Activated CD4-positive, alpha-beta T cell treated with anti-CD3 and anti-CD28 coated beads for 36 hours (primary cell): ENCODE measurements at regions of chr7 and their contacts with region 1.

Region 1: GRCh38 chr7:96321658-96322372 is at the start of gene SLC25A13:
- DNase-seq: peak; percentile 80
- ATAC-seq: peak; percentile 59
- H3K4me3 Mint-ChIP-seq: peak within 1 kb of the TSS; percentile 77
- H3K27ac Mint-ChIP-seq: peak within 1 kb of the TSS; percentile 96
- H3K4me1 Mint-ChIP-seq: peaks cover 39% of the 10 kb centered on the region
- H3K27me3 Mint-ChIP-seq: no peaks in the 10 kb centered on the region
- total RNA-seq, gene SLC25A13: 10.3 to 11.3 TPM

Region 2: GRCh38 chr7:95511716-95512260 is 810.0 kb before region 1 on chr7:
- CTCF ChIA-PET with region 1: no interaction called
- POLR2A ChIA-PET with region 1: no interaction called
- intact Hi-C with region 1: loop called in 1 of 2 experiments (anchors 10 kb)
- DNase-seq: peak; percentile 76
- ATAC-seq: peak; percentile 92
- H3K4me3 Mint-ChIP-seq: no peak overlapping the region
- H3K27ac Mint-ChIP-seq: no peak overlapping the region
- H3K4me1 Mint-ChIP-seq: no peaks in the 10 kb centered on the region
- H3K27me3 Mint-ChIP-seq: peaks cover 7% of the 10 kb centered on the region

Region 3: GRCh38 chr7:96285579-96285978 is 36.2 kb before region 1 on chr7:
- CTCF ChIA-PET with region 1: no interaction called
- POLR2A ChIA-PET with region 1: interaction called, 7 read pairs
- intact Hi-C with region 1: loop called (anchors 1 kb)
- DNase-seq: peak; percentile 37
- ATAC-seq: peak; percentile 60
- H3K4me3 Mint-ChIP-seq: peak overlapping the region; percentile 28
- H3K27ac Mint-ChIP-seq: peak overlapping the region; percentile 94
- H3K4me1 Mint-ChIP-seq: peaks cover 43% of the 10 kb centered on the region
- H3K27me3 Mint-ChIP-seq: no peaks in the 10 kb centered on the region

Region 4: DNA sequence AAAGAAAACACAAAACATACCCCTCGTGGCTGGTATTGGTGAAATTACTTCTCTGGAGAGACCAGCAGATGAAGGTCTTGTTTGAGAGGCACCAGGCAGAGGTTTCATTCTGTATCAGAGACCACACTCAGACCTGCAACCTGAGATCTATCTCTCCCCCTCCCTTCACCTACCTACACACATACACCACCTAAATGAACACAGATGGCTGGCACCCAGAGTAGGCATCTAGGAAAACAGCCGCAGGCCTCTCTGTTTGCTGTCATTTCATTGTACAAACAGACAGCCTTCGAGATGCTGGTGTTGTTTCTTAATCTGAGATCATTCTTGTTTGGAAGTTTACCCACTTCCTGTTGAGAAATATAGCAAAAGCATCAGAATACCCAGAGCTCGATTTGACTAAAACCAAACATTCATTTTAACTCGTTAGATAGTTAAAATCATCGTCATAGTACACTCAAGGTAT is 174.0 kb after region 1 on chr7:
- CTCF ChIA-PET with region 1: no interaction called
- POLR2A ChIA-PET with region 1: no interaction called
- intact Hi-C with region 1: loop called in 1 of 2 experiments (anchors 2 kb)
- DNase-seq: peak; percentile 56
- ATAC-seq: peak; percentile 92
- H3K4me3 Mint-ChIP-seq: peak overlapping the region; percentile 27
- H3K27ac Mint-ChIP-seq: peak overlapping the region; percentile 74
- H3K4me1 Mint-ChIP-seq: peaks cover 12% of the 10 kb centered on the region
- H3K27me3 Mint-ChIP-seq: no peaks in the 10 kb centered on the region

Region 5: DNA sequence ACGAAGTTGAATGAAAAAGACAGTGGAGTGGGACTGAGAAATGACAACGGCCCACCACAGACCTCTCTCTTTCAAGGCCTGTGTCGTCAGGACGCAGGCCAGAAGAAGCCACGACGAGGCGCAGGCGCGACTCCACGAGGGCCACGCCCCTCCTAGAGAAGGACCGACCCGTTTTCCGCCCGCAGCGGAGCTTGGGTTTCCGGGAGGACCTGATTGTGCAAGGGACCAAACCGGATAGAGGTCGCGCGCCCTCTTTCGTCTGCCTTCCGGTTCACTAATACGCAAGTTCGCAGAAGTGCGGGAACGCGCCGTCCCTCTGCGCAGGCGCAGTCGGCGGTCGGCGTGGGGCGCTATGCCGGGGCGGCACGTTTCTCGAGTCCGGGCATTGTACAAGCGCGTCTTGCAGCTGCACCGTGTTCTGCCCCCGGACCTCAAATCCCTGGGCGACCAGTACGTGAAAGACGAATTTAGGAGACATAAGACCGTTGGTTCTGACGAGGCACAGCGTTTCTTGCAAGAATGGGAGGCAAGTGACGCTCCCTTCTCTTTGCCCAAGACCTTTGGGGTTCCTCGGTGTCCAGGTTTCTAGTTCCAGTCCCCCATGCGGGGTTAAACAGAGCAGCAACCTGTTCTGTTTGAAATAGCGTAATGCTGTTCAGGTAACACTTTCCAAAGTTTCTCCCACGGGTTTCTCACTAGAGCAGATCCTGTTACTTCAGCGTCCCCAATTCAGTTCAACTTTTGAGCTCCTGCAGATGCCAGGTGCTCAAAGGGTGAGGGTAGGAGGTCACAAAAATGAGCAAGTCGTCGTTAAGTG is 795.8 kb after region 1 on chr7 and contains the start of gene SDHAF3:
- CTCF ChIA-PET with region 1: no interaction called
- POLR2A ChIA-PET with region 1: no interaction called
- intact Hi-C with region 1: loop called in 1 of 2 experiments (anchors 1 kb)
- DNase-seq: peak; percentile 99
- ATAC-seq: peak; percentile 95
- H3K4me3 Mint-ChIP-seq: peak within 1 kb of the TSS; percentile 82
- H3K27ac Mint-ChIP-seq: peak within 1 kb of the TSS; percentile 95
- H3K4me1 Mint-ChIP-seq: peaks cover 38% of the 10 kb centered on the region
- H3K27me3 Mint-ChIP-seq: no peaks in the 10 kb centered on the region
- total RNA-seq, gene SDHAF3: 30.2 to 44.3 TPM